B cell (primary cell): ENCODE measurements at regions of chr1 and their contacts with region 1.

Region 1: GRCh38 chr1:66380452-66381212 is 153.3 kb upstream of the SGIP1 start:
- DNase-seq: peak; percentile 91
- ATAC-seq: peak; percentile 99
- H3K4me3 ChIP-seq: peak overlapping the region in 2 of 5 experiments; percentile 13 to 39
- H3K4me3 Mint-ChIP-seq: peak overlapping the region; percentile 74
- H3K27ac ChIP-seq: peak overlapping the region; percentile 67 to 83
- H3K27ac Mint-ChIP-seq: peak overlapping the region; percentile 85
- H3K4me1 ChIP-seq: peaks cover 67 to 68% of the 10 kb centered on the region in 2 donors
- H3K4me1 Mint-ChIP-seq: peaks cover 75% of the 10 kb centered on the region
- H3K27me3 ChIP-seq: no peaks in the 10 kb centered on the region
- H3K27me3 Mint-ChIP-seq: no peaks in the 10 kb centered on the region
- CTCF ChIP-seq: no peak

Region 2: DNA sequence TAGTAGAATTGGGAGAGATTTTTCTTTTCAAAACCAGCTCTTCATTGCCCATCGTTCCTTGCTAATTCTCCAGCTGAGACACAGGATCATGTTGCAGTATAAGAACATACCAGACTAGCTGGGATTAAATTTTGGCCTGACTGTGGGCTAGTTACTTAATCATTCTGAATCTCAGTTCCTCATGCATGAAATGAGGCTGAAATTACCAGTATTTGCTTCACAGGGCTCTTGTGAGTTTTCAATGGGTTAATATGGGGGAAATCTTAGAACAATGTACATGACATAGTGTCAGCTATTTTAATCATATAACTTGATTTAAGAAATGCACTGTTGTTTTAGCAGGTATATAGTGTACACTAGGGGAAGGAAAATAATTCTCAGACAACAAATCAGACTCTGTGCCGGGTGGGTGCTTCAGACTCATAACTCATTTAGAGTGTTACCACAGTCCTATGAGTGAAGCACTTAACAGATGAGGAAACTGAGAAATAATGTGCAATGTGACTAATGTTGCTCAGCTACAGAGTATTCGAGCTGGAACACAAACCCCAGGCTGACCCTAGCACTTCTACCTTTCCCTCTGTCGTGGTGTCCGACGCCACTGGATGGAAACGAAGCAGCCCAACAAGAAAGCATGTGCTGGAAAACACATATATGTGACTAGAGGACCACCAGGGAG is 15.7 kb after region 1 on chr1:
- CTCF ChIA-PET with region 1: interaction called, 26 read pairs
- POLR2A ChIA-PET with region 1: interaction called, 18 read pairs
- intact Hi-C with region 1: loop called (anchors 1 kb)
- DNase-seq: no peak
- ATAC-seq: peak; percentile 34
- H3K4me3 ChIP-seq: no peak overlapping the region
- H3K4me3 Mint-ChIP-seq: peak overlapping the region; percentile 46
- H3K27ac ChIP-seq: peak overlapping the region in 1 of 2 donors; percentile 15
- H3K27ac Mint-ChIP-seq: peak overlapping the region; percentile 53
- H3K4me1 ChIP-seq: peaks cover 43 to 52% of the 10 kb centered on the region in 2 donors
- H3K4me1 Mint-ChIP-seq: peaks cover 72% of the 10 kb centered on the region
- H3K27me3 ChIP-seq: no peaks in the 10 kb centered on the region
- H3K27me3 Mint-ChIP-seq: no peaks in the 10 kb centered on the region
- CTCF ChIP-seq: no peak

Region 3: GRCh38 chr1:66495495-66495894 is 114.9 kb after region 1 on chr1:
- CTCF ChIA-PET with region 1: no interaction called
- POLR2A ChIA-PET with region 1: no interaction called
- intact Hi-C with region 1: no loop called
- DNase-seq: no peak
- ATAC-seq: no peak
- H3K4me3 ChIP-seq: no peak overlapping the region
- H3K4me3 Mint-ChIP-seq: no peak overlapping the region
- H3K27ac ChIP-seq: no peak overlapping the region
- H3K27ac Mint-ChIP-seq: no peak overlapping the region
- H3K4me1 ChIP-seq: peaks cover 0 to 2% of the 10 kb centered on the region in 2 donors
- H3K4me1 Mint-ChIP-seq: peaks cover 3% of the 10 kb centered on the region
- H3K27me3 ChIP-seq: no peaks in the 10 kb centered on the region
- H3K27me3 Mint-ChIP-seq: peaks cover 17% of the 10 kb centered on the region
- CTCF ChIP-seq: no peak